PC-9 (cell line): ENCODE measurements at regions of chr11 and their contacts with region 1.

Region 1: GRCh38 chr11:86355256-86355655 is 19.4 kb upstream of the CCDC81 start:
- DNase-seq: peak in 1 of 2 experiments; percentile 12
- H3K4me3 ChIP-seq: no peak overlapping the region
- H3K27ac ChIP-seq: no peak overlapping the region
- H3K4me1 ChIP-seq: no peaks in the 10 kb centered on the region
- H3K27me3 ChIP-seq: no peaks in the 10 kb centered on the region
- CTCF ChIP-seq: no peak

Region 2: GRCh38 chr11:85718126-85718943 is 636.9 kb before region 1 on chr11:
- CTCF ChIA-PET with region 1: no interaction called
- POLR2A ChIA-PET with region 1: no interaction called
- intact Hi-C with region 1: no loop called
- DNase-seq: no peak
- H3K4me3 ChIP-seq: no peak overlapping the region
- H3K27ac ChIP-seq: no peak overlapping the region
- H3K4me1 ChIP-seq: peaks cover 28% of the 10 kb centered on the region
- H3K27me3 ChIP-seq: no peaks in the 10 kb centered on the region
- CTCF ChIP-seq: no peak

Region 3: DNA sequence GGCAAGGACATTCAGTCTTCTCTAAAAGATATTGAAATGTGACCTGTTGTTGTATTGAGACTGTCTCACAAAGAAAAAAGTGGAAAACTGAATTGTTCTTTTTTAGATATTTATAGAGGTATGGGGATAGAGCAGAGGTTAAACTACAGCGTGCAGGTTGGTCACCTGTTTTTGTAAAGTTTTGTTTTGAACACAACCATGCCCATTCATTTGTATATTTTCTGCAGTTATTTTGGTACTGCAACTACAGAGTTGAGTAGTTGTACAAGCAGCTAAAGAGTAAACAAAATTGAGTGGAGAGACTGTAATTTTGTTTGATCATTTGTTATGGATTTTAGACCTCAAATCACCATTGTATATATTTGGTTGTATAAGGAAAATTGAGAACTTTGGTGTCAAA is 99.4 kb before region 1 on chr11:
- CTCF ChIA-PET with region 1: no interaction called
- POLR2A ChIA-PET with region 1: no interaction called
- intact Hi-C with region 1: no loop called
- DNase-seq: no peak
- H3K4me3 ChIP-seq: no peak overlapping the region
- H3K27ac ChIP-seq: no peak overlapping the region
- H3K4me1 ChIP-seq: no peaks in the 10 kb centered on the region
- H3K27me3 ChIP-seq: no peaks in the 10 kb centered on the region
- CTCF ChIP-seq: no peak

Region 4: GRCh38 chr11:86383041-86383955 is 28.0 kb after region 1 on chr11:
- CTCF ChIA-PET with region 1: no interaction called
- POLR2A ChIA-PET with region 1: interaction called, 10 read pairs
- intact Hi-C with region 1: no loop called
- DNase-seq: no peak
- H3K4me3 ChIP-seq: no peak overlapping the region
- H3K27ac ChIP-seq: no peak overlapping the region
- H3K4me1 ChIP-seq: no peaks in the 10 kb centered on the region
- H3K27me3 ChIP-seq: no peaks in the 10 kb centered on the region
- CTCF ChIP-seq: no peak